Astrocyte of the cerebellum (primary cell): ENCODE measurements at regions of chr3 and their contacts with region 1.

Region 1: DNA sequence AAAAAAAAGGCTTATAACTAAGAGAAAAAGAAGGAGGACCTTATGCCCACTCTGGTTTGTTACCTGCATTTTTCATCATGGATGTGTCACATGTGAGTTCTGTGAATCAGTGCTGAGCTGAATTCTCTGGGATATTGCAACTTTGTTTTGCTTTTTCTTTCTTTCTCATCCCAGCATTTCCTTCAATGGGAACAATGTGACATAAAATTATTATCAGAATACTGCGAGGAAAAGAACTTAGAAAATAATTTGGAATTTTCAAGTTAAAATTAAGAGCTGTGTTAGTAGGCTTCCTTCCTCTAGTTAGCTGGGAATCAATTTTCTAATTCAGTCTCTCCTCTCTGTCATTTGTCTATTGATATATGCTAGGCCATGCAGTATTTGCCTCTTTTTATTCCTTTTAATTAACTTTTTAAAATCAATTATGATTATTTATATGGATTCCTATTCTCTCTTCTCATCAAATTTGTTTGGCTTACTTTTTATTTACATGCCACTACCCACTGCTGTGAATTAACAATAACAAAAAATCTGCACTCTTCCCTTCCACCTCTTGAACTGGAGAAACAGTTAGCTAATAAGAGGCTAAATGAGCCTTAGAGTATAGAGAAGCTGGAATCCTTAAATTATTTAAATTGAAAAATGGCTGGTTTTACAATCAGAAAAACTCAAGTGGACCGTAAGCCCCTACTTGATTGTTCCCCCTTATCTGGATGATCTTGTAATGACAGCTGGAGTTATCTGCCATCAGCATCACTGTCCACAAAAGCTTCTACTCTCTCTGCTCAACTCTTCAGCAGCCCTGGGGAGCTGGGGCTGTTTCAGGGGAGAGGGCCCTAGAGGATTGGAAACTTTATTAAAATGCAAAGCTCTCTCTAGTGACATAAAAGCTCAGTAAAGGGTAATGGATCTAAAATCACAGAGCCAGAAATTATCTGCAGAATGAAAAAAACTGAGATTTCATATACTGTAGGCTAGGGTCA is 95.3 kb upstream of the SOX2 start:
- DNase-seq: no peak
- H3K4me3 ChIP-seq: no peak overlapping the region
- CTCF ChIP-seq: no peak

Region 2: GRCh38 chr3:181694805-181695660 is 78.7 kb after region 1 on chr3:
- in situ Hi-C with region 1: loop called (anchors 5 kb)
- DNase-seq: no peak
- H3K4me3 ChIP-seq: peak overlapping the region; percentile 44
- CTCF ChIP-seq: peak; percentile 36